GM18951 (cell line): ENCODE measurements at regions of chr20 and their contacts with region 1.

Region 1: GRCh38 chr20:24917797-24918578 is 31.1 kb upstream of the CST7 start:
- POLR2A ChIP-seq: no peak

Region 2: GRCh38 chr20:24795436-24795835 is 122.6 kb before region 1 on chr20:
- in situ Hi-C with region 1: loop called (anchors 10 kb)
- POLR2A ChIP-seq: no peak

Region 3: DNA sequence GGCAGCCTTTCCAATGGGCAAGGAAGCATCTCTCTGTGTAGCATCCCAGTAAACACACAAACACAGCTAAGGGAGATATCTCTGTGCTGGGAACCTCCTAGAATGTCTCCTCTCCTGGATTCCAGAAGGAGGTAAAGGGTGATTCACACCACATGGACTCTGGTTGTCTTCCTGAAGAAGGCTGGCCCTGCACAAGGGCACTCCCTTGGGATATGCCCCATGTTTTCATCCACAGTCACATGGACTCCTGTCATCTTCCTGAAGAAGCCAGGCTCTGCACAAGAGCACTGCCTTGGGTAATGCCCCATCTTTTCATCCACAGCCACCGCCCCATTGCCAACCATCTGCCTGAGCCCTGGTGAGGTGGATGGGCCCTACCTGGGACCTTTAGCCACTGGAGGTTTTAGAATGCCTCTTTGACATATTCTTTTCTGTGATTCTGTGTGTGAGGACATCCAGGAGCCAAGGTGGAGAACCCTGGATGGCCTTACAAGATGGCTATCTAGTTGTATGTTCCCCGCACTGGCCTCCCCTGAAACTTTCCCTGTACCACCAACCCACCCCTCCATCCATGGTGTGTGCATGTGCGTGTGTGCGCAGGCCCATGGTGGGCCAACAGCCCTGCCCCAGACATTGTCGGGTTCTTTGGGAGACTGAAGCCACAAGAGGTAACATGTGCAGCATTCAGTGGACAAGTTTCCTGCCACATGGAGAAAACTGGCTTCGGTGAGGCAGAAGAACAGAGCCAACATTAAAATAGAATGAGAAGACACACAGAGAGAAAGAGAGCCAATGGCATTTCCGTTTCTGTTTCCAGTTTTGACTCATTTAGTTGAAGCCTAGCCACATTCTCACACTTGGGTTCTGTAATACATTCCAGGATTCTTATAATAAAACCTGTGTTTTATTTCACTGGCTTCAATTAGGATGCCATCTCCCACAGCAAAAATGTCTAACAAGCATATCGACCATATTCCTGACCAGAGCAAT is 79.1 kb before region 1 on chr20:
- in situ Hi-C with region 1: loop called (anchors 10 kb)
- POLR2A ChIP-seq: no peak